Posterior vena cava (tissue), 2 donors: ENCODE measurements at regions of chr2 and their contacts with region 1.

Region 1: DNA sequence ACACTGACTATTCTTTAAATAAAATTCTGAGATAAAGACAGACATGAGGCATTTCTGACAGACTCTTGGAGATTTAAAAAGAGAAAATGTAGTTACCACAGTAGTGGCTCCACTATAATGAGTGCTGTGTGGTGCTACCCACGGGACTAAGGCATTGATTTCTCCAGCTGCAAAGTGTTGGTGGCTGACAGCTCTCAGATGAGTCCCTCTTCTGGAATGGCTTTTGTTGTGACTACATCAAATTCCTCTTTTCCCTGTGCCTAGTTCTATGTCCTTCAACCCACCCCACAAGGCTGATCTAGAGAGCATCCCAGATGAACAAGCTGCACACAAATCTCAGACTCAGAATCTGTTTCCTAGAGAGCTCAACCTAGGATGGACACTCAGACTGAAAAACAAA is 884.8 kb upstream of the ZEB2 start:
- DNase-seq: no peak

Region 2: DNA sequence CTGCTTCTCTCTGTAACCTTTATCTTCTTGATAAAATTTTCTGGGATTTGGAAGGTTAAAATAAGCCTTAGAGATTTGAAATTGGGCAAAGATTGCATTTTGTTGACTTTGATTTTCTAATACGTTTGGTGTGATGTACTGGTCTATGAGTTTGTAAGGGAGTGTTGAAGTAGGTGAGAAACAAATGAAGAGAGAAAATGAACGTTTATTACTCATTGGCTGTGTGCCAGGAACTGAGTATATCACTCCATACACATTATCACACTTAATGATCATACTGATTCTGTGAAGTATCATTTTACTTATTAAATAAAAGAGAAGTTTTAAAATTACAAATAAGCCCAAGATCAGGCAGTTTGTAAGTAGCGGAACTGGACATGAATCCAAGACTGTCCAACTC is 89.6 kb before region 1 on chr2:
- intact Hi-C with region 1: no loop called
- DNase-seq: no peak

Region 3: DNA sequence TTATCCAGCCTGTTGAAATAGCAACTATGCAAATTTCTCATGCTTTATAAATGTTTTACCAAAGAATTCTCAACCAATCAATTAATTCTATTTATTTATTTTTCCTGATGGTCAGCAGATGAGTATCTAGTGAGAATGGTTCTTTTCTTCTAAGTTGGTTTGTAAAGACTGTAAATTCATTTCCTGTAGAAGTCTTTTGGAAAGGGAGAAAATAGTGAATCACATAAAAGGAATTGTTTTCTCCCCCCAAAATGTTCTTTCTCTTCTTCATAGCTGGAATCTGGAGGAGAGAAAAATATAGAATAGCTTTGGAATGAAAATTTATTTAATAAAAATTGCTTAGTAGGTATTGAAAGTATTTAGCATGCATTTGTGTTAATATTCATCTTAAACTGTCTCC is 48.6 kb before region 1 on chr2:
- intact Hi-C with region 1: no loop called
- DNase-seq: no peak

Region 4: GRCh38 chr2:146602383-146602782 is 1197.7 kb after region 1 on chr2:
- intact Hi-C with region 1: loop called in 1 of 2 experiments (anchors 5 kb)
- DNase-seq: no peak